Spleen (tissue), 13 donors: ENCODE measurements at regions of chr9 and their contacts with region 1.

Region 1: GRCh38 chr9:36169728-36170127 is 540 bp downstream of the CCIN start:
- DNase-seq: no peak
- H3K4me3 ChIP-seq: no peak overlapping the region
- H3K27ac ChIP-seq: no peak overlapping the region
- H3K4me1 ChIP-seq: peaks cover 5 to 26% (median 14%) of the 10 kb centered on the region in 6 donors
- H3K27me3 ChIP-seq: peaks cover 0 to 6% (median 0%) of the 10 kb centered on the region in 7 donors
- CTCF ChIP-seq: no peak
- POLR2A ChIP-seq: no peak

Region 2: DNA sequence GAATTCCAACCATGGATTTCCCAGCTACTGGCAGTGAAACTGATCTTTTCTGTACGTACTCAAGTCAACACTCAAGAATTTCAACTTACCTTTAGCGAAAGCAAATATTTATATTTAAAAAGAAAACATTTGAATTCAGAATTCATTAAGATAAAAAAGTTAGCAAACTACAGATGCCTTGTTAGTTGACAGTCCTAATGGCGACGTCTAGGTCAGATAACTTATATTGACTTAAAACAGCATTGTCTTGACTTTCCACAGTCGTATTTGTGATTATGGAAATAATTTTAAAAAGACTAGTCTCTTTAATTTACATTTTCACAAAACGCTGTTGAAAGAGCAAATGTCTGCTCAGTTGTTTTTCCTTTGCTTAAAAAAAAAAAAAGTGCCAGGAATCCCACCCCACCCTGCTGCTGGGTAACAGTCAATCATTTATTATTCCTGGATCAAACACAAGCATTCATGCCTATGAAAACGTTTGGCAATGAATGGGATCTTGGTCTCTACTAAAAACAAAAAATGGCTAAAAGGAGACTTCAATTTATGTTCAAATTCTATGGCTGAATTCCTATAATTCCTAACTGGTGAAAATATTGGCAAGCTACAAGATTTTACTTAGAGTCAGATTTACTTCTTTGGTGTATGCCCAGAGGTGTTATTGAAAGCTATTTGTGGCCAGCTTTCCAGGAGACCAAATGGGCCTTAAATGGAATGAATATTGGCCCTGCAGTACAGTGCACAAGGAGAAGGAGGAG is 233.8 kb before region 1 on chr9:
- intact Hi-C with region 1: no loop called
- DNase-seq: no peak
- H3K4me3 ChIP-seq: no peak overlapping the region
- H3K27ac ChIP-seq: no peak overlapping the region
- H3K4me1 ChIP-seq: peaks cover 0 to 38% (median 7%) of the 10 kb centered on the region in 6 donors
- H3K27me3 ChIP-seq: peaks cover 0 to 7% (median 0%) of the 10 kb centered on the region in 7 donors
- CTCF ChIP-seq: no peak
- POLR2A ChIP-seq: no peak

Region 3: GRCh38 chr9:35981699-35982098 is 188.0 kb before region 1 on chr9:
- intact Hi-C with region 1: no loop called
- DNase-seq: no peak
- H3K4me3 ChIP-seq: no peak overlapping the region
- H3K27ac ChIP-seq: no peak overlapping the region
- H3K4me1 ChIP-seq: peaks cover 0 to 4% (median 0%) of the 10 kb centered on the region in 6 donors
- H3K27me3 ChIP-seq: peaks cover 0 to 68% (median 11%) of the 10 kb centered on the region in 7 donors
- CTCF ChIP-seq: no peak
- POLR2A ChIP-seq: no peak

Region 4: DNA sequence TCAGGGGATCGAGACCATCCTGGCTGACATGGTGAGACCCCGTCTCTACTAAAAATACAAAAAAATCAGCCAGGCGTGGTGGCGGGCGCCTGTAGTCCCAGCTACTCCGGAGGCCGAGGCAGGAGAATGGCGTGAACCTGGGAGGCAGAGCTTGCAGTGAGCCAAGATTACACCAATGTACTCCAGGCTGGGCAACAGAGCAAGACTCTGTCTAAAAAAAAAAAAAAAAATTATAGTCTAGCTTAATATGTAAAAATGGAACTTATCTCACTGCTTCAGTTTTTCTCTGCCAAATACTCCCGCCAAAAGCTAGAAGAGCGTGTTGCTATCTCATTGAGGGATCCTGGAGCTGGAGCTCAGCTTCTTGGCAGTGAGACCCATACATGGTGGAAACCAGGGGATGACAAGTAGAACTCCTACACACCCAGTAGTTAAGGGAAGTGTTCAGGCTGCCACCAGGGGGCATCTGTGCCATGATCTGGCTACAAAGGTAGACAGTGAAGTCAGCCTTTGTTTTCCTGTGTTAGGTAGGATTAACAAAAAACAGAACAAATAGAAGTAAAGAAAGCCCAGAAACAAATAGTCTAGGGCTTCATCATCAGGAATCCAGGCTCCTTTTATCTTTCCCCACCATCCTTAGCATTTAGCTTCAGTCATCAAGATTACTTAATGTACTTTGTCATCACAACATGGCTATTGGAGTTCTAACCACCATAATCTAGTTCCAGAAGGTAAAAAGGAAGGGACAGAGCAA is 66.8 kb before region 1 on chr9:
- intact Hi-C with region 1: loop called (anchors 2 kb)
- DNase-seq: peak; percentile 96
- H3K4me3 ChIP-seq: no peak overlapping the region
- H3K27ac ChIP-seq: peak overlapping the region in 2 of 8 donors; percentile 5 to 24
- H3K4me1 ChIP-seq: peaks cover 0 to 9% (median 6%) of the 10 kb centered on the region in 6 donors
- H3K27me3 ChIP-seq: no peaks in the 10 kb centered on the region
- CTCF ChIP-seq: peak; percentile 71 to 92 (median 86)
- POLR2A ChIP-seq: no peak